ENCODE measurements at regions of chr9 and their contacts with region 1.

Region 1: GRCh38 chr9:88660611-88661010 is 125.6 kb downstream of the NXNL2 start:
- DNase-seq: peak; percentile 50
- ATAC-seq: peak; percentile 66
- H3K4me3 ChIP-seq: no peak overlapping the region
- H3K27ac ChIP-seq: no peak overlapping the region
- H3K4me1 ChIP-seq: peaks cover 12% of the 10 kb centered on the region
- H3K27me3 ChIP-seq: no peaks in the 10 kb centered on the region
- CTCF ChIP-seq: peak; percentile 80
- EP300 ChIP-seq: no peak
- POLR2A ChIP-seq: no peak
- RAD21 ChIP-seq: no peak

Region 2: DNA sequence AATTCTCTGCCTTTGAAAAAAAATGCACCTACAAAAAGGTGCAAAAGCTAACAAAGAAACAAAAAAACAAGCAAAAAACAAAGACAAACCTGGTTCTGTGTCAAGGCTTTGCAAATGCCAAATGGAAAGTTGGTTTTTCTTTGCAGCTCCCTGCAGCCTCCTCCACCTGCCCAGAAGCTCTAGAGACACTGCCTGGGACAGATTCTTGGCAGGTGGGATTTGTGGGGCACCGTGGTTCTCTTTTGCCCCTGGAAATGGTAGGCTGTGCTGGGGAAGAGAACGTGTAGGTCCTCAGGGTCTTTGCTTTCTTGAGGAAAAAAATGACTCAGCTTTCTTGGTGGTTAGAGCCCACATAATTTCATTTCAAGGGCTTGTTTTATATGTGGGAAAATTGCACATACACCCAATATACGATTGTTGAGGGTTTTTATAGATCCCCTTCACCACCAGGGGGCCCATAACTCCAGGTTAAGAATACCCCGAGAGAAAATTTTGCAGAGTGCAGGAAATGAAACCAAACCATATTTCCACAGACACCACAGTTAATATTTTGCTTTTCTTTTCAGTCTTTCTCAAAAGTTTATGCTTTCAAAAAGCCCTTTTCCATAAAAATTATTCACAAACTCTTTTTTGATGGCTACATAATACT is 67.0 kb before region 1 on chr9:
- CTCF ChIA-PET with region 1: no interaction called
- POLR2A ChIA-PET with region 1: no interaction called
- in situ Hi-C with region 1: no loop called
- intact Hi-C with region 1: loop called (anchors 5 kb)
- DNase-seq: peak; percentile 46
- ATAC-seq: peak; percentile 74
- H3K4me3 ChIP-seq: no peak overlapping the region
- H3K27ac ChIP-seq: no peak overlapping the region
- H3K4me1 ChIP-seq: no peaks in the 10 kb centered on the region
- H3K27me3 ChIP-seq: peaks cover 0 to 10% of the 10 kb centered on the region in 2 experiments; a peak in 2 of 5 replicates
- CTCF ChIP-seq: peak; percentile 60
- EP300 ChIP-seq: no peak
- POLR2A ChIP-seq: no peak
- RAD21 ChIP-seq: 0 out of 2 replicates have a peak, but pooled peaks have one; percentile 12

Region 3: GRCh38 chr9:88628114-88628513 is 32.5 kb before region 1 on chr9:
- CTCF ChIA-PET with region 1: no interaction called
- POLR2A ChIA-PET with region 1: no interaction called
- in situ Hi-C with region 1: no loop called
- intact Hi-C with region 1: no loop called
- DNase-seq: no peak
- ATAC-seq: no peak
- H3K4me3 ChIP-seq: no peak overlapping the region
- H3K27ac ChIP-seq: no peak overlapping the region
- H3K4me1 ChIP-seq: no peaks in the 10 kb centered on the region
- H3K27me3 ChIP-seq: no peaks in the 10 kb centered on the region
- CTCF ChIP-seq: no peak
- EP300 ChIP-seq: no peak
- POLR2A ChIP-seq: no peak
- RAD21 ChIP-seq: no peak

Region 4: DNA sequence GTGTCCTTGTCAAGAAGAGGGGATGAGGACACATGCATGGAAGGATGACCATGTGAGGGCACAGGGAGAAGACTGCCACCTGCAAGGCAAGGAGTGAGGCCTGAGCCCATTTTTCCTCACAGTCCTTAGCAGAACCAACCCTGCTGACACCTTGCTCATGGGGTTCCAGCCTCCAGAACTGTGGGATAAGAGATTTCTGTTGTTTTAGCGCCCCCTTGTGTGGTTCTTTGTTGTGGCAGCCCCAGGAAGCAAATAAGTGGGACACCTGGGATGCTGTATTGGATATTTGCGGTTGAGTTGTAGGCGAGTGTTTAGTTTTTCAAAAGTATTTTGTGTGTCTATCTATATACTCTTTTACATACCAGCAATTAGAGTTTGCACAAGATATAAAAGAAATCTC is 80.7 kb after region 1 on chr9:
- CTCF ChIA-PET with region 1: interaction called, 32 read pairs
- POLR2A ChIA-PET with region 1: no interaction called
- in situ Hi-C with region 1: loop called (anchors 5 kb)
- intact Hi-C with region 1: loop called (anchors 1 kb)
- DNase-seq: peak; percentile 23
- ATAC-seq: peak; percentile 50; the same call in 2 of the 3 replicates
- H3K4me3 ChIP-seq: no peak overlapping the region
- H3K27ac ChIP-seq: no peak overlapping the region
- H3K4me1 ChIP-seq: no peaks in the 10 kb centered on the region
- H3K27me3 ChIP-seq: peaks cover 1 to 12% of the 10 kb centered on the region in 2 experiments; a peak in 2 of 5 replicates
- CTCF ChIP-seq: peak; percentile 75
- EP300 ChIP-seq: no peak
- POLR2A ChIP-seq: no peak
- RAD21 ChIP-seq: peak; percentile 69

Region 5: DNA sequence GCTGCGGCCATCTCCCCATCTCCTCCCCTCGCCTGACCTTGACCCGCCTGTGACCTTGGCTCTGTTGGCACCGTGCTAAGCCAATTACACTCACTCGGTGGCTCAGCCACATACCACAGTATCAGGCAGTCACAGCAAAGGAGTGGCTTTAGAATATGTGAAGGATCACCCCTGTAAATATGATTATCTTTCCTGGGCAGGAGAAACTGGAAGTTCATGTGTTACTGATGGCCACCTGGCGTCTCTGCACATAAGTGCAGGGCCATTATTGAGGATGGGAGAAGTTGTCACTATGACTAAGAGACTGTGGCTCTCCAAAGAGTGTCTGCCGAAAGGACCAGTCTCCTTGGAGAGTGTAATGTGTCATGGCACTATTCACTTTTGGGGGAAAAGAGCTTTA is 213.8 kb after region 1 on chr9:
- CTCF ChIA-PET with region 1: no interaction called
- POLR2A ChIA-PET with region 1: no interaction called
- in situ Hi-C with region 1: loop called (anchors 10 kb)
- intact Hi-C with region 1: loop called (anchors 2 kb)
- DNase-seq: peak; percentile 20
- ATAC-seq: peak; percentile 81
- H3K4me3 ChIP-seq: no peak overlapping the region
- H3K27ac ChIP-seq: no peak overlapping the region
- H3K4me1 ChIP-seq: peaks cover 20% of the 10 kb centered on the region
- H3K27me3 ChIP-seq: 0 out of 5 replicates have a peak, but pooled peaks cover 0 to 5% of the 10 kb centered on the region in 2 experiments
- CTCF ChIP-seq: peak; percentile 43
- EP300 ChIP-seq: no peak
- POLR2A ChIP-seq: no peak
- RAD21 ChIP-seq: no peak

Region 6: GRCh38 chr9:89000973-89001916 is 340.6 kb after region 1 on chr9:
- CTCF ChIA-PET with region 1: interaction called, 6 read pairs
- POLR2A ChIA-PET with region 1: no interaction called
- in situ Hi-C with region 1: loop called (anchors 5 kb)
- intact Hi-C with region 1: no loop called
- DNase-seq: peak; percentile 65
- ATAC-seq: peak; percentile 96
- H3K4me3 ChIP-seq: no peak overlapping the region
- H3K27ac ChIP-seq: no peak overlapping the region
- H3K4me1 ChIP-seq: no peaks in the 10 kb centered on the region
- H3K27me3 ChIP-seq: peaks cover 0 to 4% of the 10 kb centered on the region in 2 experiments; a peak in 2 of 5 replicates
- CTCF ChIP-seq: peak; percentile 91
- EP300 ChIP-seq: no peak
- POLR2A ChIP-seq: no peak
- RAD21 ChIP-seq: peak; percentile 87